ENCODE measurements at regions of chr7 and their contacts with region 1.

Region 1: GRCh38 chr7:128209229-128210035 is 31.6 kb upstream of the LEP start:
- DNase-seq: peak; percentile 88
- CTCF ChIP-seq: peak; percentile 97

Region 2: DNA sequence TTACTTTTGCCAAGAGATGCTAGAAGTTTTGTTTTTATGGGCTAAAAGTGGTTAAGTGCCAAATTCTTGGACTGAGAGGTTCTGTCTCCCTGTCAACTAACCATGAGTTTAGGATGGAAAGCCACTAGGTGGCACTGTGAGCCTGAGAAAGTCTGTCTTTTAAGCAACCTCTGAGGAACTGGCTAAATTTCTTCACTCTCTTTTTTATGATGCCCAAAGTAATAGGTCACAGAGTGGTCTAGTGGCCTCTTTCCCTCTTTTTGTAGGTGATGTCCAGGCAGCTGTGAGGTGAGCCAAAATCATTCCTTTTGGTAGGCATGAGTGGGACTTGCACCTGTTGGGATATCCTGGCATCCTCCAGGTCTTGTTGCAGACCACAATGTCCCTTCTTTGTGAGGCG is 500.6 kb before region 1 on chr7:
- in situ Hi-C with region 1: loop called (anchors 10 kb)
- DNase-seq: peak; percentile 34
- CTCF ChIP-seq: peak; percentile 51

Region 3: GRCh38 chr7:128830231-128831177 is 621.1 kb after region 1 on chr7 and contains the start of gene FLNC:
- in situ Hi-C with region 1: no loop called
- DNase-seq: peak; percentile 58
- CTCF ChIP-seq: no peak

Measured in GM13976 (cell line).